ENCODE measurements at regions of chr22 and their contacts with region 1.

Region 1: GRCh38 chr22:19178656-19179496 is at the start of gene SLC25A1:
- DNase-seq: peak; percentile 63
- ATAC-seq: peak; percentile 82
- H3K4me3 ChIP-seq: peak within 1 kb of the TSS; percentile 67 to 82
- H3K27ac ChIP-seq: peak within 1 kb of the TSS; percentile 94
- H3K4me1 ChIP-seq: peaks cover 7 to 49% of the 10 kb centered on the region in 2 experiments
- H3K27me3 ChIP-seq: no peaks in the 10 kb centered on the region
- CTCF ChIP-seq: no peak
- POLR2A ChIP-seq: peak; percentile 32
- RAD21 ChIP-seq: no peak
- total RNA-seq, gene SLC25A1: 146 TPM

Region 2: DNA sequence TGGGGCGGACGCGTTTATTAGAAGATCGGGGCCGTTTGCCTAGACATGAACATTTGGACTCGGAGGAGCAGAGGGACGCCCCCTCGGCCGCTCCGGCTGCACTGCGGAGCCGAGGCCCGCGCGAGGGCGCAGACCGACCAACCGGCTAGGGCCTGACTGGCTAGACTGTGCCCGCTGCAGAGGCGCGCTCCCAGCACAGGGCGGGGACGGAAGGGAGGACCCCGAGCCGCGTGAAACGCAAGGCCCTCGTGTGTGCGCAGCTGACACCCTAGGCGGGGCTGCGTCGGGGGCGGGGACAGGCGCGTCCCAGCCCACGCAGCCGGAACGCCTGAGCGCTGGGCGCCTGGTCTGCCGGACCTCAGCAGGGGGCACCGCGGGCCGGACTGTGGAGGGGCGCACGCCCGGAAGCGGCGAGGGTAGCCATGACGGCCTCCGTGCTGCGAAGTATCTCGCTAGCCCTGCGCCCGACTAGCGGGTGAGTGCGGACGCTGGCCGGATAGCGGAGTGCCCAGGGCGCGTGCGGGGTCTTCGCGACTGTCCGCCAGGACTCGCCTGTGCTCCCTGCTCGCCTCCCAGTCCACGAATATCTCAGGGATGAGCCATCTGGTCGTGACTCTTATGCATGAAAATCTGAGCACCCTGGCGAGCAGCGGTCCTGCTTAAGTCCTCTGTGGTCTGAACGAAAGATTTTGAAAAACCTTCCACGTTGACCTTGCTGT is 253.4 kb after region 1 on chr22 and contains the start of gene MRPL40:
- CTCF ChIA-PET with region 1: no interaction called
- POLR2A ChIA-PET with region 1: interaction called, 4 read pairs
- RAD21 ChIA-PET with region 1: no interaction called
- intact Hi-C with region 1: loop called (anchors 2 kb)
- DNase-seq: peak; percentile 85
- ATAC-seq: peak; percentile 89
- H3K4me3 ChIP-seq: peak within 1 kb of the TSS; percentile 92 to 94
- H3K27ac ChIP-seq: peak within 1 kb of the TSS; percentile 98
- H3K4me1 ChIP-seq: peaks cover 16 to 17% of the 10 kb centered on the region in 2 experiments
- H3K27me3 ChIP-seq: no peaks in the 10 kb centered on the region
- CTCF ChIP-seq: no peak
- POLR2A ChIP-seq: peak; percentile 97
- RAD21 ChIP-seq: no peak
- total RNA-seq, gene MRPL40: 40.1 TPM

Measured in HCT116 (cell line).